Gastrocnemius medialis (tissue), 4 donors: ENCODE measurements at regions of chr3 and their contacts with region 1.

Region 1: DNA sequence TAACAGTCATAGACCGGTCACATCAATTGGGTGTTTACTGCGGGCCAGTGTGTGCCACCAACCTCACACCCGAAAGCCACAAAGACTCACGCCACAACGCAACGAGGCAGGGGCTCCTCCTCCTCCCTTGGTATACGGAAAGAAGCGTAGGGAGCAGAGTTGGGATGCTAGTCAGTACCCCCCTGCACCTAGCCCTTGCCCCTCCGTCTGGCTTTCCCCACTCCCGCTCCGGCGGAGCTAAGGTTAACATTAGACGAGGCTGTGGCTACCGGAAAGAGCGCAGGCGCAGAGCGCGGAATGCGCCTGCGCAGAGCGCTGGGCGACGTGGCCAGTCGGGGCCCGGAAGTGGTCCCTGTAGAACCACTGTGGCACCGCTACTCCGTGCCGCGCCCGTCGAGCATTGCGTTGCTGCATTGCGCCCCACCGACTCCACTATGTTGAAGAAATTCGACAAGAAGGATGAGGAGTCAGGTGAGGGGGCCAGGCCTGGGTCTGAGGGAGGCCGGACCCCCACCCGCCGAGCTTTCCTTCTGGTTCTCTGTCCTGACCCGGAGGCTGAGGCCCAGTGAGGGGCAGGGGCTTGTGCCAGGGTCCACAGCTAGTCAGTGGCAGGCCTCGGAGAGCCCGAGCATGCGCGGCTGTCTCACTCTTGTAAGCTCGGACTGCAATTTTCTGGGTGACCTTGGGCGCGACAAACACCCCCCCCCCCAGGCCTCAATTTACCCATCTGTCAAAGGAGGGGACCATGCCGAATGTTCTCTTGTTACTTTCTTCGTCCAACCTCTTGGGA is at the start of gene COPG1:
- DNase-seq: peak; percentile 63 to 83
- ATAC-seq: peak; percentile 86 to 91
- H3K4me3 ChIP-seq: peak within 1 kb of the TSS; percentile 69 to 93 (median 88)
- H3K27ac ChIP-seq: peak within 1 kb of the TSS; percentile 87 to 91 (median 89)
- H3K4me1 ChIP-seq: peaks cover 23 to 27% of the 10 kb centered on the region in 2 donors
- H3K27me3 ChIP-seq: no peaks in the 10 kb centered on the region
- CTCF ChIP-seq: peak in 1 of 5 experiments; percentile 8
- POLR2A ChIP-seq: peak; percentile 88 to 92
- total RNA-seq, gene COPG1: 59.7 to 101 (median 79.8) TPM

Region 2: DNA sequence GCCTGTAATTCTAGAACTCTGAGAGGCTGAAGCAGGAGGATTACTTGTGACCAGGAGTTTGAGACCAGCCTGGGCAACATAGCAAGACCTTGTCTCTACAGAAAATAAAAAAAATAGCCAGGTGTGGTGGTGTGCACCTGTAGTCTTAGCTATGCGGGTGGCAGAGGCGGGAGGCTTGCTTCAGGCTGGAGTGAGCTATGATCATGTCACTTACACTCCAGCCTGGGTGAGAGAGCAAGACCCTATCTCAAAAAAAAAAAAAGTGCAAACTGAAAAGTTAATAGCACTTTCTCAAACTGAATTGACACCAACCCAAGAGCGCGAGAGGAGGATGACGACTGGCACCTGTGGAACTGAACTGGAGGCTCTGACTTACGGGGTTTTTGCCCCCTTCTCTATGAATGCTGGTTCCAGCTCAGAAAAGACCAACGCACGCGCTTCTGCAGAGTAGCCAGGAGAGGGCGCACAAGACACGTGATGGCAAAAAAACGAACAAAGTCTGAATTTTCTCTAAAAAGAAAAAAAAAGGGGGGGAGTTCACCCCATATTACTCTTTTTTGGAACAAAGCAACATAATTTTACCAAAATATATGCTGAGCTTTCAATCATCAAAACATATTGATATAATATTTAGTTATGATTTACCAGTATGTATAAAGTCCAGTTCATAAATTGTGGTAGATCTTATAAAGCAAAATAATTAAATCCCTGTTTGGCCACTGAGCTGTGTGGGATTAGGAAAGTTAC is 279.3 kb before region 1 on chr3:
- in situ Hi-C with region 1: loop called (anchors 5 to 10 kb)
- intact Hi-C with region 1: loop called (anchors 1 kb)
- DNase-seq: no peak
- ATAC-seq: no peak
- H3K4me3 ChIP-seq: no peak overlapping the region
- H3K27ac ChIP-seq: no peak overlapping the region
- H3K4me1 ChIP-seq: peaks cover 11 to 21% of the 10 kb centered on the region in 2 donors
- H3K27me3 ChIP-seq: no peaks in the 10 kb centered on the region
- CTCF ChIP-seq: peak; percentile 74 to 94 (median 81)
- POLR2A ChIP-seq: no peak

Region 3: DNA sequence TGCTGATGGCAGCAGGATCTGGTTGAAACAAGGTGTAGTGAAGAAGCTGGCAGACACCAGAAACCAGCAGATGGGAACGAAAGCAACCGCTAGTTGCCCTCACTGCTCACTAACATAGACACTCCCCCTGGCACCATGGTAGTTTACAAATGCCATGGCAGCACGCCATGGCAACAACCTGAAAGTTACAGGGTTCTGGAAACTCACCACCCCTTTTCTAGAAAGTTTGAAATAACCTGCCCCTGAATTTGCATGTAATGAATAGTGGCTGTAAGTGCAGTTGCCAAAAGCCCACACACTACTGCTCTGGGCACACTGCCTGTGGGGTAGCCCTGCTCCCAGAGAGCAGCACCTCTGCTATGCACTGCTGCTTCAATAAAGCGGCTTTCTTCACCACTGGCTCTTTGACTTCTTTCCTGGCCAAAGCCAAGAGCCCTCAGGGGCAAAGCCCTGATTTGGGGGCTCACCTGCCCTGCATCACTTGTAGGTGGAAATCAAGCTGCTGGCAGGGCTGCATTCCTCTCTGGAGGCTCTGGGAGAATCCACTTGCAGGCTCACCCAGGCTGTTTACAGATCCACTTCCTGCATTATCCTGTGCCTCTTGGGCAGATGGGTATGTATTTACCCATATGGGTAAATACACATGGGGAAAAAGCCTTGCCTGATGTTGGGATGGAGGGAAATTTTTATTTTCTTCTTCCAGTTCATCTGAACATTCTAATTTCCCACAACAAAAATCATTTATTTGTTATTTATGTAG is 190.8 kb before region 1 on chr3:
- in situ Hi-C with region 1: loop called in 1 of 4 experiments (anchors 10 kb)
- intact Hi-C with region 1: loop called (anchors 2 kb)
- DNase-seq: no peak
- ATAC-seq: no peak
- H3K4me3 ChIP-seq: no peak overlapping the region
- H3K27ac ChIP-seq: no peak overlapping the region
- H3K4me1 ChIP-seq: peaks cover 0 to 2% of the 10 kb centered on the region in 2 donors
- H3K27me3 ChIP-seq: no peaks in the 10 kb centered on the region
- CTCF ChIP-seq: no peak
- POLR2A ChIP-seq: no peak

Region 4: DNA sequence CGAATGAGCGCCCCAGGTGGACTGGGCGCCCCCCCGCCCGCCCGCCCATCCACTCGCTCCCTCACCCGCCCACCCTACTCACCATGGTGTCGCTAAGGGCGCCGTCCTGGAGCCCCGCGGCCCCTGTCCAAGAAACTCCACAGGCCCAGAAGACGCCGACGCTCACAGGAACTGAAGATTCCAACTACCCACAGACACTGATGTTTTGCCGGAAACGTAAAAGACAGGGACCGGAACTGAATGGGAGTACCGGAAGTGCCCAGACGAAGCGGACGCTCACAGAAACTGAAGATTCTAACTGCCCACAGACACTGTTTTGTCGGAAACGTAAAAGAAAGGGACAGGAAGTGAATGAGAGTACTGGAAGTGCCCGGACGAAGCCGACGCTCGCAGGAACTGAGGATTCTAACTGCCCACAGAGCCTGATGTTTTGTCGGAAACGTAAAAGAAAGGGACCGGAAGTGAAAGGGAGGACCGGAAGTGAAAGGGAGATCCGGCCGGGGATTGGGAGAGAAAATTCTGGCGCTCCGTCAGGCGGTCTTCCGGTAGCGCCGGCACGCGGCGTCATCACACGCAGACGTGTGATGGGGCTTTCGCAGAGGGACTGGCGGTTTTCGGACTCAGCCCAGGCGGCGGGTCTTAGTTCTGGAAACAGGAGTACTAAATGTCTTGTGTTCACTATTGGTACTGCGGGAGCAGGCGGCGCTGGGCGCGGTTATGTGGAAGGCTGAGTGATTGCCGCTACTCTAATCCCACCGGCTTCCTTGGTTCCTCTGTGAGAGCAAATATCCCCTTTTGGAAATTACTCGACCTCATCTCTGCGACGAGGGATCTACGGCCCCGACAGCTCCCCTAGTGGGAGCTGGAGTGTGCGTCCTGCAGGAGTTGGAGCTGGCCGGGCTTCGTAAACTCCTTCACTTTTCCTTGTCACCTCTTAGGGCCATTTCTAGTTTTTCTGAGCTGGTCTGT is 88.3 kb before region 1 on chr3 and contains the start of gene ISY1:
- in situ Hi-C with region 1: no loop called
- intact Hi-C with region 1: loop called (anchors 1 kb)
- DNase-seq: peak; percentile 83 to 87
- ATAC-seq: peak; percentile 82 to 86
- H3K4me3 ChIP-seq: peak within 1 kb of the TSS; percentile 76 to 97 (median 84)
- H3K27ac ChIP-seq: peak within 1 kb of the TSS; percentile 93 to 97 (median 96)
- H3K4me1 ChIP-seq: peaks cover 26 to 36% of the 10 kb centered on the region in 2 donors
- H3K27me3 ChIP-seq: no peaks in the 10 kb centered on the region
- CTCF ChIP-seq: peak; percentile 80 to 94 (median 82)
- POLR2A ChIP-seq: peak; percentile 87 to 88
- total RNA-seq, gene ISY1: 19.6 to 34.9 (median 22.3) TPM

Region 5: DNA sequence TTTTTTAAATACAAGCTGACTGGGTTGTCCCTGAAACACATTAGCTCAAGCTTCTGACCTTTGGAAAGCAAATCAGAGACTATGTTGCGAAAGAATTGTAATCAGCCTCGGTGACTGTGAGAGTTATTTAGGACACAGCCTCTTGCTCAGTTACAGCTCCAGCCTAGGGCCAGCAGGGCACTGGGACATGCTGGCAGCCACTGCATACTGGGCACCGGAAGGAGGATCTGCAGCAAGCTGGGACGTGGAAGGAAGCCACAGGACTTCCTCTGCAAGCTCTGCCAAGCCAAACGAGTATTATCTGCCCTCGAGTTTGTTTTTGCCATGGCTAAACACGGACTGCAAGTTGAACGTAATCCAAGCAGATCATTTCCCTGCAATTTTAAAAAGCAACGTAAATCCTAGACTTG is 24.5 kb before region 1 on chr3:
- in situ Hi-C with region 1: no loop called
- intact Hi-C with region 1: loop called (anchors 2 kb)
- DNase-seq: peak; percentile 96 to 99
- ATAC-seq: peak; percentile 82 to 87
- H3K4me3 ChIP-seq: peak overlapping the region; percentile 1 to 14 (median 5)
- H3K27ac ChIP-seq: peak overlapping the region; percentile 84 to 97 (median 94)
- H3K4me1 ChIP-seq: peaks cover 48 to 52% of the 10 kb centered on the region in 2 donors
- H3K27me3 ChIP-seq: no peaks in the 10 kb centered on the region
- CTCF ChIP-seq: peak in 1 of 5 experiments; percentile 23
- POLR2A ChIP-seq: peak; percentile 35 to 56